AG04449 (cell line): ENCODE measurements at regions of chr11 and their contacts with region 1.

Region 1: GRCh38 chr11:13772223-13773046 is 104.0 kb downstream of the FAR1 start:
- DNase-seq: peak; percentile 1
- H3K4me3 ChIP-seq: no peak overlapping the region
- CTCF ChIP-seq: peak; percentile 9

Region 2: DNA sequence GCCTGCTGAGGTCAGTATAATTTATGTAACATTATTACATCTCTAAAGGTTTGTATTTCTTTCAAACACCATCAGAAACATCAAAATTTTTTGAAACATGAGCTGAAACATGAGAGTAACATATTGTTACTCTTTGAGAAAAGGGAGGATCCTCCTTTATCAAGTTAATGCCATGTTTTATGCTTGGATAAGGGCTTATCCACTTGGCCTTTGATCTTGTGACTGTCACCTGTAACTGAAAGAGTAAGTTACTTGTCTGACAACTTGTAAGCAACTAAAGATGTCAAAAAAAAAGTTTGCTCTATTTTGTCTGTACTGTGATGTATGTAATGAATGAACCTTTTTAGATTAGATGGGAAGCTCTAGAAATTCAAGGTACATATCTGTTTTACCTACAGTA is 44.4 kb before region 1 on chr11:
- CTCF ChIA-PET with region 1: no interaction called
- POLR2A ChIA-PET with region 1: no interaction called
- DNase-seq: no peak
- H3K4me3 ChIP-seq: no peak overlapping the region
- CTCF ChIP-seq: no peak

Region 3: DNA sequence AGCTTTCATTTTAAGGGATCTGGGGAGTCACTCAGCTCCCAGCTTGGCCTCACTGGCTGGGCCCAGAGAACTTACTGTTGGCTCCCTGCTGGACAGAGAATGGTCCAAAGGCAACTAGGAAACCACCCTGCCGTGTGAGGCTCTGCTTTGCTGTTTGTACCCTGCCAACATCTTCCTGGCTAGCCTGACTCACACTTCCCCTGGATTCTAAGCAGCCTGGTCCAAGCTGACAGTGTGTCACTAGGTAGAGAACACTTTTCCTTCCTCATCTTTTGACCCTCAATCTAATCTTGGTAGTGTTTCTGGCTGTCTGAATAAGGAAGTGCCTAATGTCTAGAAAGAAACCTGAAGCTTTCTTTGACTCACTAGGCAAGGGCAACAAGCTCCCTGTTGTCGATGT is 27.3 kb before region 1 on chr11:
- CTCF ChIA-PET with region 1: no interaction called
- POLR2A ChIA-PET with region 1: no interaction called
- DNase-seq: no peak
- H3K4me3 ChIP-seq: no peak overlapping the region
- CTCF ChIP-seq: no peak

Region 4: DNA sequence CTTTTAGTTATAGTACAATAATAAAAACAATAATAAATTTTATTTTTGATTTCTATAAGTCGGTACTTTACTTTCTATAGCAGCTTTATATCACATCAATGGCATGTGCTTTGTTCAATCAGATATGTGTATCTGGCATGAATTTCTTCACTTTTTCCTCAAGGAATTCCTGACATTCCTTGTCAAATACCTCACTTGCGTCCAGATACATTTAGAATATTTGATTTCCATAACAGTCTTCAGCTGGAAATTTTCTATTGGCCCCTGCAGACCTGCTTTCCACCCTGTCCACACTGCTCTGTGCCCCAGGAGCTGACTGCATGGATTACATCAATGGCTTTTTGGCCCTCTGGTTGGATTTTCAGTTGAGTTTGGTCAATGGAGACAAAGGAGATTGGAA is 10.7 kb before region 1 on chr11:
- CTCF ChIA-PET with region 1: interaction called, 18 read pairs
- POLR2A ChIA-PET with region 1: no interaction called
- DNase-seq: peak; percentile 26
- H3K4me3 ChIP-seq: no peak overlapping the region
- CTCF ChIP-seq: no peak

Region 5: GRCh38 chr11:14148653-14149273 is 376.3 kb after region 1 on chr11:
- CTCF ChIA-PET with region 1: interaction called, 15 read pairs
- POLR2A ChIA-PET with region 1: no interaction called
- DNase-seq: no peak
- H3K4me3 ChIP-seq: no peak overlapping the region
- CTCF ChIP-seq: peak; percentile 31

Region 6: DNA sequence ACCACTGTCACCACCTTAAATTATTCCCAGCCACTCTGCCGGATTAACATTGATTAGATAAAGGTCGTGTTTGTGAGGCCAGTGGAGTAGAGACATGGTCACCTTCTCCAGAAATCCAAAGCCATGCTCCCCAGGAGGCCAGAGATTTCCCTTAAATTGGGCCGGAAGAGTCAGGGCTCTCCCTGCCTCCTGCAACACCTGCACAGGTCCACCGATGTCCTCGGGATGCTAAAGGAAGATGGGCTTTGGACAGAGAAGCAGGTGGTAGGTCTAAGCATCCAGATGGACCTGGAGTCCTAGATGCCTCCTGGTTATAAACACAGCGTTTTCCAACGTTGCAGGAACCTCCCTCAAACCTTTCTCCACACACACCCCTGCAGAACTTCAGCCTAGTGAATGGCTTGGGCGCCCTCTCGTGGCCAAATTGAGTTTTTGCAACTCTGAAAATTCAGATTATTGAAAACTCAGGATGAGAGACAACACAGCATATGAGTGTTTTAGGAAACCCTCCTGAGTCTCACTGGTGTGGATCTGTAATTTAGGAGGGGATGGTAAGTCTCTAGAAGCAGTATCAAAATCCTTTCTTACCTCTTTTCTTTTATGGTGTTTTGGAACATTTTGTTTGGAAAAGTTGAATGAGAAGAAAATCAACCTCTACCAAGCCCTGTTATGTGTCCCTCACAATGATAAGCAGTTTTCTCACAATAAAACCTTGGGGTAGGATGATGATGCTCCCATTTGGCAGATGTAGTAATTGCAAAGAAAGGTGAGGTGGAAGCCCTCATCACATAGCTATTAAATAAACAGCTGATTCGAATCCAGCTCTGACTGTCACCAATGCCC is 476.9 kb after region 1 on chr11:
- CTCF ChIA-PET with region 1: interaction called, 37 read pairs
- POLR2A ChIA-PET with region 1: no interaction called
- DNase-seq: no peak
- H3K4me3 ChIP-seq: no peak overlapping the region
- CTCF ChIP-seq: peak; percentile 75